Activated CD4-positive, alpha-beta T cell treated with anti-CD3 and anti-CD28 coated beads for 36 hours (primary cell): ENCODE measurements at regions of chr9 and their contacts with region 1.

Region 1: DNA sequence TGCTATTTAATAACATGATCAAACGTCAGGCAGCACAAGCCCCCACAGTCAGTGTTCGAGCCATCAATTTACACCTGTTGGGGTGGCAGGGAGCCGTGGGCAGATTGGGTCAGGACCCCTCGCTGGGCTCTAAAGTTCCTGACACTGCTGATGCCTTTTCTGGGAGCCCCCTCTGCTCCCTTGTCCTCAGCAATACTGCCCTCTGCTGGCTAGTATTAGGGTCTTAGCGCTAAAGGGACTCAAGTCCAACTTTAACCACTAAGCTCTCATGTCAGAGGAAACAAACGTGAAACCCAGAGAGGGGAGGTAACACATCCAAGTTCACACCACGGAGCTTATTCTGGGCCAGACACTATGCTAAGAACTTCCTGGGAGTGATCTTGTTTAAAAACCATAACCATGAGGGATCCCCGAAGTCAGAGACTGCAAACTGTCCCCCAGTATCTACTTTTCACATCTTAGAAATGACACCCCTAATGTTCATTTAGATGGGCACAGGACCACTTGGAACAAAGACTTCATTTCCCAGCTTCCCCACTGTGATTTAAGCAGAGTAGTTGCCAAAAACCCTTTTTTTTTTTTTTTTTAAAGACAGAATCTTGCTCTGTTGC is 20.4 kb downstream of the ANKS6 start:
- DNase-seq: peak; percentile 47
- ATAC-seq: no peak
- H3K4me3 Mint-ChIP-seq: no peak overlapping the region
- H3K27ac Mint-ChIP-seq: no peak overlapping the region
- H3K4me1 Mint-ChIP-seq: no peaks in the 10 kb centered on the region
- H3K27me3 Mint-ChIP-seq: no peaks in the 10 kb centered on the region

Region 2: GRCh38 chr9:98315551-98316060 is 460.3 kb before region 1 on chr9:
- CTCF ChIA-PET with region 1: interaction called, 18 read pairs
- POLR2A ChIA-PET with region 1: no interaction called
- intact Hi-C with region 1: loop called (anchors 1 to 2 kb)
- DNase-seq: peak; percentile 90
- ATAC-seq: peak; percentile 96
- H3K4me3 Mint-ChIP-seq: no peak overlapping the region
- H3K27ac Mint-ChIP-seq: no peak overlapping the region
- H3K4me1 Mint-ChIP-seq: no peaks in the 10 kb centered on the region
- H3K27me3 Mint-ChIP-seq: no peaks in the 10 kb centered on the region

Region 3: DNA sequence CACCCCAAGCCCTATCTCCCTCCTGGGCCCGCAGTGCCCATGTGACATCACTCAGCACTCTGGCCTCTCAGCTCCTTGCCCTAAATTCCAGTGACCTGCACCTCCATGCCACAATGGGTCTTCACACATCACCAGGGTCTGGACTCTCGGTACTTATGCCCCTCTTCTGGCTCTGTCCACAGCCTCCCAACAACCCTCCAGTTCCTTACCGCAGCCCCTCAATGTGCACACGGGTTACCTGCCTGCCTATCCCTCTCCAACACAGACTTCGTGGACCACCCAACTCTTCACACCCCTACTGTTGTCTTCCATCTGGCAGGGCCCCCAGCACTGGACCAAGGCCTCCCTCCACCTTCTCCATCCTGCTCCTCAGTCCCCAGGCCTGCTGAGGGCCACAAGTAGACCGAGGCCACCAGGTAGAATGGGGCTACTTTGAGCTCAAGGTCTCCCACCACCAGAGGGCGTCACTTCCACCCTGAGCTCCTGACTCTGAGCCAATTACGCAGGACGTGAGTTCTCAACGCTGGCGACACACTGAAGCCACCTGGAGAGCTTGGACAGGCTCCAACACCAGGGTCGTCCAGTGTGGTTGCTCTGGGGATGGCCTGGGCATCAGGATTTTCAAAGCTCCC is 239.3 kb before region 1 on chr9:
- CTCF ChIA-PET with region 1: interaction called, 3 read pairs
- POLR2A ChIA-PET with region 1: no interaction called
- intact Hi-C with region 1: loop called (anchors 5 to 10 kb)
- DNase-seq: peak; percentile 63
- ATAC-seq: no peak
- H3K4me3 Mint-ChIP-seq: no peak overlapping the region
- H3K27ac Mint-ChIP-seq: no peak overlapping the region
- H3K4me1 Mint-ChIP-seq: no peaks in the 10 kb centered on the region
- H3K27me3 Mint-ChIP-seq: peaks cover 4% of the 10 kb centered on the region